Natural killer cell (primary cell): ENCODE measurements at regions of chr10 and their contacts with region 1.

Region 1: GRCh38 chr10:12390733-12391132 is 41.4 kb downstream of the CAMK1D start:
- DNase-seq: no peak
- ATAC-seq: no peak
- H3K4me3 ChIP-seq: no peak overlapping the region
- H3K4me3 Mint-ChIP-seq: no peak overlapping the region
- H3K27ac ChIP-seq: no peak overlapping the region
- H3K27ac Mint-ChIP-seq: no peak overlapping the region
- H3K4me1 ChIP-seq: peaks cover 6% of the 10 kb centered on the region
- H3K4me1 Mint-ChIP-seq: peaks cover 53 to 59% of the 10 kb centered on the region in 2 donors
- H3K27me3 ChIP-seq: no peaks in the 10 kb centered on the region
- H3K27me3 Mint-ChIP-seq: no peaks in the 10 kb centered on the region
- CTCF ChIP-seq: no peak

Region 2: GRCh38 chr10:12431151-12432101 is 40.7 kb after region 1 on chr10:
- intact Hi-C with region 1: loop called (anchors 5 kb)
- DNase-seq: no peak
- ATAC-seq: no peak
- H3K4me3 ChIP-seq: no peak overlapping the region
- H3K4me3 Mint-ChIP-seq: no peak overlapping the region
- H3K27ac ChIP-seq: no peak overlapping the region
- H3K27ac Mint-ChIP-seq: no peak overlapping the region
- H3K4me1 ChIP-seq: no peaks in the 10 kb centered on the region
- H3K4me1 Mint-ChIP-seq: peaks cover 17 to 32% of the 10 kb centered on the region in 2 donors
- H3K27me3 ChIP-seq: no peaks in the 10 kb centered on the region
- H3K27me3 Mint-ChIP-seq: no peaks in the 10 kb centered on the region
- CTCF ChIP-seq: no peak